ENCODE measurements at regions of chr1 and their contacts with region 1.

Region 1: DNA sequence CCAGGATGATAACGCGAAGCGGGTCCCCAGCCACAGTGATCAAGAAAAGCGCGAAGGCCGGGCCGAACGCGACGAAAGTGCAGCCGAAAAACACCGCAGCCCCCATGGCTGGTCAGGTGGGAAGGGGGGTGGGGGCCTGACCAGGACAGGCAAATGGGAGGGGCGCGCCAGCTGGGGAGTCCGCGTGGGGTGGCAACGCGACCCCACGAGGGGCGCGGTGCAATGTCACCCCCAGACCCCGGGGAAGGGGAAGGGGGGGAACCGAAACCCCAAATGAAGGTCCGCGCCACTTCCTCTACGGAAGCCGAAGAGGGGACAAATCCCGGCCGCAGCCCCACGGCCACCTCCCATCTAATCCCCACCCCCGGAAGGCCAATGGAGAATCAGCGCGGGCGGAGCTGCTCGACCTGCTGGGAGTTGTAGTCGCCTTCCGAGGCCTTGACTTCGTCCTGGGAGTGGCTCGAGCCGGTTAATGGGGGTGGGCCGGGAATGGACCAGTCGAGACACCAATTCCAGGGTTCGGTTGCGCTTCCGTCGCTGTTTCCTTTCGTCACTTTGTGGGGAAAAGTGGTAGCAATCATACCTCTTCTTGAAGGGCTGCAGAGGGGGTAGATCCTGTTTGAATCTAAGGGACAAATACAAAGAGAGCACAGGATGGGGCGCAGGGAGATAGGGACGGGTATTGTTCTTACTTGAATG is at the start of gene APH1A:
- DNase-seq: peak; percentile 87 to 95 (median 88)
- H3K4me3 ChIP-seq: peak within 1 kb of the TSS; percentile 77
- H3K4me3 Mint-ChIP-seq: peak within 1 kb of the TSS; percentile 91 to 98 (median 93)
- H3K27ac ChIP-seq: peak within 1 kb of the TSS; percentile 94
- H3K27ac Mint-ChIP-seq: peak within 1 kb of the TSS; percentile 88 to 100 (median 97)
- H3K4me1 ChIP-seq: peaks cover 24% of the 10 kb centered on the region
- H3K4me1 Mint-ChIP-seq: peaks cover 24 to 35% (median 32%) of the 10 kb centered on the region in 3 donors
- H3K27me3 ChIP-seq: no peaks in the 10 kb centered on the region
- H3K27me3 Mint-ChIP-seq: peaks cover 0 to 5% of the 10 kb centered on the region in 2 donors
- total RNA-seq, gene APH1A: 139 to 140 TPM

Region 2: DNA sequence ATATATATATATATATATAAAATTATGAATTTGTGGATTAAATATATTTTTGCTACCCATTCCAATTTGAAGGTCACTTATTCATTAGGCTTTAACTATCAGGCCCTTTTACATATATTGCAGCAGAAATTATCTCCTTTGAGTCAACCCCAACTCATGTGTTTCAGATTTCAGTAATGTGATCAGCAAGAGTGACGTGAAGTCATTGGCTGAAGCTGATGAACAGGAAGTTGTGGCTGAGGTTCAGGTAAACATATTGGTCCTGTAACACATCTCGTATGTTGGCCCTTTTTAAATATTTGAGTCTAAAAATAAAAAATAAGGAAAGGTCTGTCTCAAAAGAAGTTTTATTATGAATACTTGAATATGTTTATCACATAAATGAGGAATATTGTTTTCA is 192.8 kb before region 1 on chr1:
- CTCF ChIA-PET with region 1: no interaction called
- POLR2A ChIA-PET with region 1: no interaction called
- DNase-seq: no peak
- H3K4me3 ChIP-seq: no peak overlapping the region
- H3K4me3 Mint-ChIP-seq: no peak overlapping the region
- H3K27ac ChIP-seq: no peak overlapping the region
- H3K27ac Mint-ChIP-seq: peak overlapping the region in 5 of 8 donors; percentile 10 to 63 (median 21)
- H3K4me1 ChIP-seq: no peaks in the 10 kb centered on the region
- H3K4me1 Mint-ChIP-seq: peaks cover 8 to 36% (median 34%) of the 10 kb centered on the region in 3 donors
- H3K27me3 ChIP-seq: no peaks in the 10 kb centered on the region
- H3K27me3 Mint-ChIP-seq: no peaks in the 10 kb centered on the region

Region 3: DNA sequence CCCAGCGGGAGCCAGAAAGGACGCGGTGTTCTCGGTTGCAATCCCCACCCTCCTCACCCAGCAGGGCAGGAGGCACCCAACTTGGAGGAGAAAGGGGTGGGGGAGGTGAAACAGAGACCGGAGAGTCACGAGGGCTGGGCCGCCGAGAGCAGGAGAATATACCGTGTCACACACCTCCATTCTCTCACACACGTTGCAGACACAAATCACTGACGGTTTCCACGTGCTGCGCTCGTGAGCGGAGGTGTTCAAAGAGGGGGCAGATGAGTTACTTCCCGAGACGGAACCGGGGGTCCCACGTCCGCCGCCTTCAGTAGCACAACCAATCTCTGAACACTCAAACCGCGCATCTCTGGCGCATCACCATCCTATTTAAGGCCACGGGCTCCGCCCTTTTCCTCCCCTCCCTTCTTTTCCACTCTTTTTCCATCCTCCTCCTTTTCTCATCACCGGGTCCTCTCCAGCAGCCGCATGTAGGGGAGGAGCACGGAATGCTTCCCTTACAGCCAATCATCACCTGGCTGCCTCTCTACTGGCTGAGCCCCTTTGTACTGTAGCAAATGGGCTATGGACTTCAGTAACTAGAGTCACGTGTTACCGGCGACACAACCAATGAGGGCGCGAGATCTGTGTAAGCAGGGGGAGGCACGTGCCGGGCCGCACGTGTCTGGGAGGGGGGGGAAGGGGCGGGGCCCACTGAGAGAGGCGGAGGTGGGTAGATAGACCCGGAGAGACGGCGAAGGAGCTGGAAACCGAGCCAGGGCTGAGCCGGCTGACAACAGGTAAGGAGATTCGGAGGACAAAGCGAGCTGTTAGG is 13.2 kb after region 1 on chr1 and contains the start of gene CIART:
- CTCF ChIA-PET with region 1: interaction called, 8 read pairs
- POLR2A ChIA-PET with region 1: interaction called, 12 read pairs
- DNase-seq: peak; percentile 48 to 90 (median 78)
- H3K4me3 ChIP-seq: peak within 1 kb of the TSS; percentile 67
- H3K4me3 Mint-ChIP-seq: peak within 1 kb of the TSS; percentile 79 to 94 (median 87)
- H3K27ac ChIP-seq: peak within 1 kb of the TSS; percentile 22
- H3K27ac Mint-ChIP-seq: peak within 1 kb of the TSS; percentile 71 to 98 (median 94)
- H3K4me1 ChIP-seq: peaks cover 27% of the 10 kb centered on the region
- H3K4me1 Mint-ChIP-seq: peaks cover 25 to 31% (median 27%) of the 10 kb centered on the region in 3 donors
- H3K27me3 ChIP-seq: no peaks in the 10 kb centered on the region
- H3K27me3 Mint-ChIP-seq: no peaks in the 10 kb centered on the region
- total RNA-seq, gene CIART: 0.81 to 1.7 TPM

Region 4: DNA sequence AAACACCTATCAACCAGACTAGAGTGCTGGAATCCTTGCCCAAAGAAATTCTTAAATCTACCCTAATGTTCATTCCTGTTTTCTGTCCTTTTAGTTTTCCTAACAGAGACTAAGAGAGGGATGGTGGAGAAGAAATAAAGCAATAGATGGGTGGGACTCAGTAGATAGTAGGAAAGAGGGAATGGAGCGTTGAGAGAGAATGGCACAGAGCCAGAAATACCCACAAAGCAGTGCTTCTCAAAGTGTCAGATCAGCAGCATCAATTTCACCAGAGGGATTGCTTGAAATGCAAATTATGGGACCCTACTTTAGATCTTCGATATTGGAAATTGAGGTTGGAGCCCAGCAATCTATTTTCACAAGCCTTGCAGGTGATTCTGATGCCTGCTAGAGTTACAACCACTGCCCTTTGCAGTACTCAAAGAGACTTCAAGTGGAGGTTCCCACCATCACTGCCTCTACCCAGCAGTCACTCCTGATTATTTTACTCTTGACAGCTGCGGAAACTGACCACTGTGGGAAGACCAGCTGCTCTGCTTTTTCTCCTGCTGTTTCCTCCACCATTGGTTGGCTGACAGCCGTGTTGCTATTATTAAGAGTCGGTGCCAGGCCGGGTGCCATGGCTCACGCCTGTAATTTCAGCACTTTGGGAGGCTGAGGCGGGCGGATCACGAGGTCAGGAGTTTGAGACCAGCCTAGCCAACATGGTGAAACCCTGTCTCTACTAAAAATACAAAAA is 41.1 kb after region 1 on chr1:
- CTCF ChIA-PET with region 1: no interaction called
- POLR2A ChIA-PET with region 1: no interaction called
- DNase-seq: no peak
- H3K4me3 ChIP-seq: no peak overlapping the region
- H3K4me3 Mint-ChIP-seq: no peak overlapping the region
- H3K27ac ChIP-seq: no peak overlapping the region
- H3K27ac Mint-ChIP-seq: peak overlapping the region in 2 of 8 donors; percentile 46 to 79
- H3K4me1 ChIP-seq: no peaks in the 10 kb centered on the region
- H3K4me1 Mint-ChIP-seq: no peaks in the 10 kb centered on the region
- H3K27me3 ChIP-seq: no peaks in the 10 kb centered on the region
- H3K27me3 Mint-ChIP-seq: no peaks in the 10 kb centered on the region

Measured in CD8-positive, alpha-beta memory T cell (primary cell).